Uterus (tissue), 4 donors: ENCODE measurements at regions of chr1 and their contacts with region 1.

Region 1: DNA sequence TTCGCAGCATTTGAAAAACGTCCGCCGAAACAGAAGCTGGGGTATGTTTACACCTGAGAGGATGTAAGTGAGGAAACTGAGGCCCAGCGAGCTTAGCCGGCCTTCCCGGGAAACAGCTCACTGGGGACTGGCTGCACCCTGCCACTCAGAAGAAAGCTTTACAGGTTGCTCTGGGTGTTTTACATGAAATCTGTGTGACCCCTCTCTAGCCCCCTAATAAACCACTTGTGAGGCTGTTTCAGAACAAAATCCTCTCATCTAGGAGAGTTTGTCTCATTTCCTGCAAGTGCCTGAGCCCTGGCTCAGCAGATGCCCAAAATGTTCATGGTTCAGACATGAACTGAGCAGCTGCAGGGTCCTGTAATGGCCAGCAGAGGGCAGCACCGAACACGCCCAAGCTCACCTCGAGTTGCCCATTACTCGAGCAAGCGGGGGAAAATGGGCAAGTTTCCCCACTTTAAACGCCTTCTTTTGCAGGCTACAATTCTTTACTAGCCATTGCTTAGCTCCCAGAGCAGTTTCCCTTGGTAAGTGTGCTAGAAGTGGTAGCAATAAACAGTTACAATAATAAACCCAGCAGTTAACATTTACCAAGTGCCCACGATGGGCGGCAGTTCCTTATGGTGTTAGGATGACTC is 76.4 kb downstream of the FHAD1 start:
- DNase-seq: peak; percentile 78 to 82
- H3K4me3 ChIP-seq: no peak overlapping the region
- H3K27ac ChIP-seq: no peak overlapping the region
- H3K4me1 ChIP-seq: no peaks in the 10 kb centered on the region
- H3K27me3 ChIP-seq: no peaks in the 10 kb centered on the region
- CTCF ChIP-seq: peak; percentile 92 to 99 (median 96)
- POLR2A ChIP-seq: no peak

Region 2: GRCh38 chr1:15430787-15431570 is 107.5 kb after region 1 on chr1:
- intact Hi-C with region 1: loop called (anchors 2 kb)
- DNase-seq: peak; percentile 61 to 71
- H3K4me3 ChIP-seq: no peak overlapping the region
- H3K27ac ChIP-seq: no peak overlapping the region
- H3K4me1 ChIP-seq: no peaks in the 10 kb centered on the region
- H3K27me3 ChIP-seq: no peaks in the 10 kb centered on the region
- CTCF ChIP-seq: peak; percentile 94 to 96 (median 95)
- POLR2A ChIP-seq: no peak